Posterior vena cava (tissue), 2 donors: ENCODE measurements at regions of chr21 and their contacts with region 1.

Region 1: DNA sequence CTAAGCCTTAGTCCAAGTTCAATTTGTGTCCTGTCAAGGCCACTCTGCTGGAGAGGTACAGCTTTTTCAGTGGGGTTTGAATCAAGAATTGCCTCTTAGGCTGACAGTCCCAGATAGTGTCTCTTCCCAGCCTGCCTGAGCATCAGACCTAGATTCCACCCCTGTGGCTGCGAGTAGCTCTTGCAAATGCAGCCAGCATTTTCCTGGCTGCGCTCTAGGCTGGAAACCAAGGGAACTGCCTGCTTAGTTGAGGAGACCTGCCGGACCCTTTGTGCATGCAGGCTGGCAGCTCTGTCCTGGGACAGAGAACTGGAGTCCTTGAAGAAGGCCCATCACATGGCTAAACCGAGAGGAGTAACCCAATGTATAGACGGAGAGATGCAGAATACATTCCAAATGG is 293.7 kb downstream of the PCP4 start:
- DNase-seq: no peak

Region 2: DNA sequence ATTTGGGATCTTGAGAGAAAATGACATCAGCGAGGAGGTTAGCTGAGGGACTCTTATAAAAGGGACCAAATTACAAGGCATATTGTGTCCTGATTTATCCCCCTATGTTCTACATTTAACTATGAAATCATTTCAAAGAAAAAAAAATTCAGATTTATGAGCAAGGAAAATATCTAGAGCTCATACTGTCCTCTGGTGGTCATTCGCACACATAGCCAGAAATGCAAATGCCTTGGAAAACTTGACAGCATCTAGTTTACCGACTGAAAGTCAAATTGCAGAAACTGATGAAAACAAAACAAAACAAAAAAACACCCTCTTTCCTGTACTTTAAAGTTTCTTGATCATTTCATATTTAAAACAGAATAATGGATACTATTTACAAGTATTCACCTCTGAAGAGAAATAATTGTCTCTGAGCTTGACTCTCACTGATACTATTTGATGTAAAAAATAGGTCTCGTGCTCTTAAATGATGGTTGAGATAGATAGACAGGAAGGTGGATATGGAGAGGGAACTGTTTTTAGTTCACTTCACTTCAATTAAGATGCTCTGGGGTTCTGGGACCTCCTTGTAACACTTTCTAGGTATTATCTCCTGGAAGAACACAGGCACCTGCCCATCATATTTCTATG is 39.9 kb before region 1 on chr21:
- intact Hi-C with region 1: no loop called
- DNase-seq: no peak

Region 3: DNA sequence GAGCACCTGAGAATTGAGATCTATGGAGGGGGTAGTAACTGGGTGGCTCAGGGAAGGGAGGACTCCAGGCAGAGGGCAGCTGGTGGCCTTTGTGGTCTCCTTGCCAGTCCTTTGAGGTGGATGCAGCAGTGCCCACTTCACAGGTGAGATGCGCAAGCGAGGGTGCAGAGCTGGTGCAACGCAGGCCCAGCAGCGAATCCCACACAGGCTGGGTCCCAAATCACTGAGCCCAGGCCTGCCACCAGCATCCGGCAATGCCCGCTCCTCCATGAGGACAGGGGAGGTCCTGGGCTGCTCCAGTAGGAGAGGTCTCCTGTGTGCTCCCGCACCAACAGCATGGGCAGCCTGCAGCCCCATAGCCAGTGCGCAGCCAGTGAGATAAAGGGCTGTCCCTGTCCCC is 24.3 kb after region 1 on chr21:
- intact Hi-C with region 1: loop called in 1 of 2 experiments (anchors 1 kb)
- DNase-seq: no peak